Activated CD4-positive, alpha-beta T cell treated with anti-CD3 and anti-CD28 coated beads, Interleukin-2, amount 10 ng/mL, durations not matched to agents 24 days and 14 days (primary cell): ENCODE measurements at regions of chr1 and their contacts with region 1.

Region 1: DNA sequence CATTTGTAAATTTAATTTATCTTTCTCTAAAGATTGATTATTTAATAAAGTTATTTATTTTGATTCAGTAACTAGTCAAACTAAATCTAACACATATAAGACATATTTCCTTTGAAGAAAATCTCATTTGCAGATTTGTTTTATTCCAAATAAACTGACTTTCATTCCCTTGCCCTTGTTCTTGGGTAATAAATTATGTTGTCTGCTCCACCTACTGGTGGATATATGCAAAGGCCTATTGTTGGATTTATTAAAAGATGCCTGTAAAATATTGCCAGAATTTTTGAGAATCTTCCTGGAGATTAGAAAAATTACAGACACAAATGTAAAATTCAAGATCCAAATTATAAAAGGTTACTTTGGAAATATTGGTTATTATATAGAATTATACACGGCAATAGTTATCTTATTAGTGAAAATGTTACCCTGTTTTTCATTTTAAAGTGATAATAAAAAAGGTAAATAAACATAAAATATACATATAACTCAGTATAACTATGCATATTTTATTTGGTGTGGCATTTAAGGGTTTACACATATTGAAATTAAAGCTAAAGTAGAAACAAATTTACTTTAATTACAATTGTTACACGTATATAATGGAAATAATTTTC is 116.1 kb downstream of the SPATA17 start:
- DNase-seq: no peak
- H3K4me3 Mint-ChIP-seq: no peak overlapping the region
- H3K27ac Mint-ChIP-seq: no peak overlapping the region
- H3K4me1 Mint-ChIP-seq: no peaks in the 10 kb centered on the region
- H3K27me3 Mint-ChIP-seq: no peaks in the 10 kb centered on the region

Region 2: DNA sequence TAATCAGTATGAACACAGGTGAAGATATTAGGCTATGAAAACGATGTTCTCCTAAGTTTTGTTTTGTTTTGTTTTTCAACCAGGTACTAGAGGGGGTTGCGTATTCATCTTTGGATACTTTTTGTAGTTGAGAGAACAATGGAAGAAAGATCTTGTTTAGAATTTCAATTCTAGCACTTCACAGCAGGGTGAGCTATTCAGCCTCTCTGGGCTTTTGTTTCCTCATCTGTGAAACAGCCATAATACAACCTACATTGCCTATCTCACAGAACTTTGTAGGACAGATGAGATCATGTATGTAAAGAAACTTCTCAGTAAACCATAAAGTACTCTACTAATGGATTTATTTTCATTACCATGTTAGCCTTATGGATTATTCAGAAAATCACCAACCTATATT is 315.9 kb before region 1 on chr1:
- intact Hi-C with region 1: loop called (anchors 5 kb)
- DNase-seq: no peak
- H3K4me3 Mint-ChIP-seq: no peak overlapping the region
- H3K27ac Mint-ChIP-seq: no peak overlapping the region
- H3K4me1 Mint-ChIP-seq: no peaks in the 10 kb centered on the region
- H3K27me3 Mint-ChIP-seq: no peaks in the 10 kb centered on the region